ENCODE measurements at regions of chr16 and their contacts with region 1.

Region 1: DNA sequence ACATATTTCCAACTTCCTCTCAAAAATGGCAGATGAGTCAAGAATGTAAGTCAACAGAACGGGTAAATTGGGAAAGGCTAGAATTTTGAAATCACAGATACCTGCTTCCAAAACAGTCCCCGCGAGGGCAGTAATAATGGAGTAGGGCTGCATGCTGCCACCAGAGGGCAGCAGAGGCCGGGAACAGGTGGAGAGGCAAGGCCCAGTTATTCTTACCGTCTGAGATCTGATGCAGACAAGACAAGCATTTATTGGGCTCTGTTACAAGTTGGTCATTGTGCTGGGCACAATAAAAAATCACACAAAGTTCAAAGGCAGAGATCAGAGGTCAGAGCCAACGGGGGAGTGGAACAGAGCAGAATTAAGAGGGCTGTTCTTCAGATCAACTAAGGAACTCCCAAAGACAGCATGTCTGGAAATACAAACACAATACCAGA is 8.8 kb upstream of the MLKL start:
- DNase-seq: peak; percentile 82
- H3K4me3 ChIP-seq: no peak overlapping the region
- H3K27ac ChIP-seq: no peak overlapping the region
- H3K4me1 ChIP-seq: no peaks in the 10 kb centered on the region
- H3K27me3 ChIP-seq: no peaks in the 10 kb centered on the region
- CTCF ChIP-seq: peak; percentile 94 to 96
- POLR2A ChIP-seq: no peak

Region 2: DNA sequence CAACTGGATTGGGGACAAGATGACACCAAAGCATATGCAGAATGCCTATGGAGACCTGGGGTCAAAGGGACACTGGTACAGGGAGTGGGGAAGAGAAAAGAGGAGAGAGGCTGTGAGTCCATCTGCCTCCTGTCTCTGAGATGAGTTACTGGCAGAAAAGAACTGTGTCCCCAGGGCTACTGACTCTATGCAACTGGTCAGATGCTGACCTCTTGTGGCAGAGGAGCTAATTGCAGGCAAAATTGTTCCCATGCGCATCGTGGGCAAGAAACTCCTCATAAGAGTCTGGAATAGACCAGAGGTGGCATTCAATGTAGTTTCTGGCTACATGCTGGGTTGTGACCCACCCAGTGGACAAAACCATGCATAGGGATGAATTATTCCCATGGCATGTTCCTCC is 17.3 kb after region 1 on chr16:
- CTCF ChIA-PET with region 1: interaction called, 14 read pairs
- POLR2A ChIA-PET with region 1: no interaction called
- dilution Hi-C with region 1: no loop called
- intact Hi-C with region 1: no loop called
- DNase-seq: no peak
- H3K4me3 ChIP-seq: no peak overlapping the region
- H3K27ac ChIP-seq: no peak overlapping the region
- H3K4me1 ChIP-seq: no peaks in the 10 kb centered on the region
- H3K27me3 ChIP-seq: no peaks in the 10 kb centered on the region
- CTCF ChIP-seq: peak; percentile 34 to 40
- POLR2A ChIP-seq: no peak

Region 3: DNA sequence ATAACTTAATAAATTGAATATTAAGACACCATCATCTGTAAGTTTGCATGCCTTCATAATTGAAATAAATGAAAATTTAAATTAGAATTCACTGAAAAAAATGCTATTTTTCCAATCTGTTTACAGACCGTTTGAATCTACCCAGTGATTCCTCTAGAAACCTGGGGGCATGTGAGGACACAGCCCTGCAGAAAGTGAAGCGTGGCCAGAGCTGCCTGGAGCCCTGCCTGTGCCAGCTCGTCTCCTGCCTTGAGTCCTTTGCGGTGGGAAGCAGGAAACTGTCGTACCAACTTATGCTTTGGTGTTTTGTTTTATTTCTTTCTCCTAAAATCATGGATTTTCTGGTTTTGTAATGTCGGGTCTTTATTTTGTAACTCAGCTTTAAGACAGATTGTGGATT is 133.0 kb after region 1 on chr16:
- CTCF ChIA-PET with region 1: no interaction called
- POLR2A ChIA-PET with region 1: no interaction called
- dilution Hi-C with region 1: no loop called
- intact Hi-C with region 1: no loop called
- DNase-seq: no peak
- H3K4me3 ChIP-seq: no peak overlapping the region
- H3K27ac ChIP-seq: no peak overlapping the region
- H3K4me1 ChIP-seq: no peaks in the 10 kb centered on the region
- H3K27me3 ChIP-seq: no peaks in the 10 kb centered on the region
- CTCF ChIP-seq: no peak
- POLR2A ChIP-seq: no peak

Region 4: DNA sequence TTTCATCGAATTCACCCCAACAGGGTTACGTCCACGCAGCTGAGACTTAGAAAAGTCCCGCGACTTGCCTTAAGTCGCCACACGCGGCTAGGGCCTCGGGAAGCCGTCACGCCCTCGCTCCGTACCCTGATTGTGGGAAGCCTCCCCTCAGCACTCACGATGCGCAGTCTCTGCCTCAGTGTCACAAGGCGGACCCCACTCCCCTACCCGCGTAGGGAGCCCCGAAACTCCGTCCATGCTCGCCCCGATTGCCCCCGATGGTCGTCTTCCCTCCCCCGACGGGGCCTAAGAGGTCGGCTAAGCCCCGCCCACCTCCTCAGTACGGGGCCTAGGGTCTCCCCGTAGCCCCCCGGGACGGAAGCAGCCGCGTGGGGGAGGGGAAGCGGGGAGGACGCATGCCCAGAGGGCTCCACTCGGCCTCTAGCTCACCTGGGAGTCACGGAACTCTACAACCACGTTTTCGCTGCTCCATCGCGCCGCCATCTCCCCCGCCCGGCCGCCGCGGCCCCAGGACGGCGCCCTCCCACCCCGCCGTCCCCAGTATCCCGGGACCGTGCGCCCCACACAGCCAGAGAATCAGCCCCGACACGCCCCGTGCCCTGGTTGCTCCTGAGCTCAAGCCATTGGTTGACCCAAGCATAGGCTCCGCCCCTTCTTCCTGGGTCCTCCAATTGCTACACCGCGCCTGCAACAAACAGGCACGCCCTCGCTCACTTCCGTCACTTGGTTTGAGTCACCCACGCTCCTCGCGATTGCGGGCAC is 275.3 kb after region 1 on chr16 and contains the start of gene WDR59:
- CTCF ChIA-PET with region 1: no interaction called
- POLR2A ChIA-PET with region 1: no interaction called
- dilution Hi-C with region 1: no loop called
- intact Hi-C with region 1: loop called (anchors 10 kb)
- DNase-seq: peak; percentile 99
- H3K4me3 ChIP-seq: peak within 1 kb of the TSS; percentile 41 to 89 (median 73)
- H3K27ac ChIP-seq: peak within 1 kb of the TSS; percentile 42
- H3K4me1 ChIP-seq: no peaks in the 10 kb centered on the region
- H3K27me3 ChIP-seq: no peaks in the 10 kb centered on the region
- CTCF ChIP-seq: no peak
- POLR2A ChIP-seq: peak; percentile 84
- total RNA-seq, gene WDR59: 60.0 and 62.2 TPM in 2 replicates